ENCODE measurements at regions of chr2 and their contacts with region 1.

Region 1: DNA sequence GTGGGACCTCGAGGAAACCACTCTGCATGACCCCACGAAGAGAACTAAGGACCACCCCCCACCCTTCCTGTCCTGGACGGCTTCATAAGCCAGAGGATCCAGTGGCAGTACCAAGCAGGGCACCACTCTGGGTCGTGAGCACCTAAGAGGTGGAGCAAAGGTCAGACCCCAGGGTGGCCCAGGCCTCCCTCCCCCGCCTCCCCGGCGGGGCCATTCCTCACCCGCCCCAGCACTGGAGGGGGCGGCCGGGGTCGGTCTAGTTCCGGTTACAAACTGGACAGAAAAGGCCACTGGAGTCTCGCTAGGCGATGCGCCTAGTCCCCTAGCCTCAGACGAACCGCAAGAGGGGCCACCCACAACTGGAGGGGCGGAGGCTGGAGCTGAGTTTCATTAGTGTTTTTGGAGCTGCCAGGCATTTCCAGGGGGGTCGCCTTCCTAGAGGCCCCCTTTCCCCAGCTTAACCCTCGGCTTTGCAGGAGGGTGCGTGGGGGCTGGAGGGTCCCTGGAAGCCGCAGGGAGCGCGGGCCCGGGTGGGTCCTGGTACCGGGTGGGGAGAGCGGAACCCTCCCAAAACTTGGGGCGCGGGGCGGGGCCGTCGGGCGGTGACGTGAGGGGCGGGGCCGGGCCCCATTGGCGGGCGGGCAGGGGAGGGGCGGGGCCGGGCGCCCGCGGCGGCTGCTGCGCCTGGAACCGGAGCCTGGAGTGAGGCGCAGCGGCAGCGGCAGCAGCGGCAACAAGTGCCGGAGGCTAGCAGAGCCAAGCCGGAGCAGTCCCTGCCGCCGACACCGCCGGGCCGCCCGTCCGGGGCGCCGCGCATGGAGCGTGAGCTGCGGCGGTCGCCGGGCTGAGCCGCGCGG is at the start of gene B3GNT2:
- DNase-seq: peak; percentile 79 to 92 (median 84)
- ATAC-seq: peak; percentile 75
- H3K4me3 ChIP-seq: peak within 1 kb of the TSS; percentile 93 to 99
- H3K4me3 Mint-ChIP-seq: peak within 1 kb of the TSS; percentile 91
- H3K27ac ChIP-seq: peak within 1 kb of the TSS; percentile 86 to 90
- H3K27ac Mint-ChIP-seq: peak within 1 kb of the TSS; percentile 91
- H3K4me1 ChIP-seq: peaks cover 40% of the 10 kb centered on the region
- H3K4me1 Mint-ChIP-seq: peaks cover 32% of the 10 kb centered on the region
- H3K27me3 ChIP-seq: no peaks in the 10 kb centered on the region
- H3K27me3 Mint-ChIP-seq: no peaks in the 10 kb centered on the region
- CTCF ChIP-seq: no peak
- total RNA-seq, gene B3GNT2: 74.1 to 77.9 TPM

Region 2: DNA sequence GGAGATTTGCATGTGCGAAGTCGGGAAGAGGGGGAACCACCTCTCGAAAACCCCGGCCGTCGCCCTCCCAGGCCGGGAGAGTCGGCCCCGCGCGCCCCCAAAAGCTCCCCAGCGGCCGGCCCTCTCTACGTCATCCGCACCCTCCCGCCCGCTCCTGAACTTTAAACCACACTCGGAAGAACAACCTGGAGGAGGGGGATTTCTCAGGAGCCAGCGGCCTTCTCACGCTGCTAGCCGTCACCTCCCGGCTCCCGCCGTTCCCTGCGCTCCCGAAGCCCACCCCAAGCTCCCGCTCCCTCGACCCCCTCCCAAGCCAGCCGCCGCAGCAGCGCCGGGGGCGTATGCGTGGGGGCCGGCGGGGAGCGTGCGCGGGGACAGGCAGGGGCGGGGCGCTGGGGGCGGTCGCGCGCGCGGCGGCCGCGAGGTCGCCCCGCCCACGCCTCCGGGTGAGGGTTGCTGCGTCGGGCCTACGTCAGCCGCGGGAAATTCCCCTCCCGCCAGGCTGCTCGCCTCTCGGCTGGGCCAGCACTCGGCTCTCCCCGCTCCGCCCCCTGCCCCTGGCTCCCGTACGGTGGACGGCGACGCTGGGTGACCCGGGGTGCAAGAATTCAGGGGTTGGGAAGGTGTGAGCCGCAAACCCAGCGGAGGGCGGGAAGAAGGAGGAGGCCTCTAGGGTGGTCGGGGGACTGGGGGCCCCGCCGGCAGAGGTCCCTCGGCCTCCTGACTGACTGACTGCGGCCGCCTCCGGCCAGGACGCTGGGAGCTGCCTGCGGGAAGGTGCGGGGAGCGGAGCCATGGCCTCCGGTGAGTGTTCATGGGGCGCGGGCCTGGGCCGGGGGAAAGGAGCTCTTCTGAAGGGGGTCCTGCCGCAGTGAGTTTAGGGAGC is 1314.4 kb before region 1 on chr2 and contains the start of gene REL:
- CTCF ChIA-PET with region 1: no interaction called
- POLR2A ChIA-PET with region 1: no interaction called
- intact Hi-C with region 1: loop called in 1 of 2 experiments (anchors 5 kb)
- DNase-seq: peak; percentile 80 to 98 (median 89)
- ATAC-seq: peak; percentile 78
- H3K4me3 ChIP-seq: peak within 1 kb of the TSS; percentile 85 to 99
- H3K4me3 Mint-ChIP-seq: peak within 1 kb of the TSS; percentile 93
- H3K27ac ChIP-seq: peak within 1 kb of the TSS; percentile 97 to 100
- H3K27ac Mint-ChIP-seq: peak within 1 kb of the TSS; percentile 99
- H3K4me1 ChIP-seq: peaks cover 34% of the 10 kb centered on the region
- H3K4me1 Mint-ChIP-seq: peaks cover 30% of the 10 kb centered on the region
- H3K27me3 ChIP-seq: no peaks in the 10 kb centered on the region
- H3K27me3 Mint-ChIP-seq: no peaks in the 10 kb centered on the region
- CTCF ChIP-seq: no peak
- total RNA-seq, gene REL: 202 to 205 TPM

Region 3: GRCh38 chr2:61694312-61695274 is 501.1 kb before region 1 on chr2:
- CTCF ChIA-PET with region 1: no interaction called
- POLR2A ChIA-PET with region 1: no interaction called
- intact Hi-C with region 1: loop called (anchors 10 kb)
- DNase-seq: peak; percentile 65 to 89 (median 82)
- ATAC-seq: peak; percentile 95
- H3K4me3 ChIP-seq: peak overlapping the region; percentile 88 to 93
- H3K4me3 Mint-ChIP-seq: peak overlapping the region; percentile 90
- H3K27ac ChIP-seq: peak overlapping the region; percentile 43 to 63
- H3K27ac Mint-ChIP-seq: peak overlapping the region; percentile 87
- H3K4me1 ChIP-seq: peaks cover 14% of the 10 kb centered on the region
- H3K4me1 Mint-ChIP-seq: peaks cover 16% of the 10 kb centered on the region
- H3K27me3 ChIP-seq: no peaks in the 10 kb centered on the region
- H3K27me3 Mint-ChIP-seq: no peaks in the 10 kb centered on the region
- CTCF ChIP-seq: peak; percentile 52

Region 4: DNA sequence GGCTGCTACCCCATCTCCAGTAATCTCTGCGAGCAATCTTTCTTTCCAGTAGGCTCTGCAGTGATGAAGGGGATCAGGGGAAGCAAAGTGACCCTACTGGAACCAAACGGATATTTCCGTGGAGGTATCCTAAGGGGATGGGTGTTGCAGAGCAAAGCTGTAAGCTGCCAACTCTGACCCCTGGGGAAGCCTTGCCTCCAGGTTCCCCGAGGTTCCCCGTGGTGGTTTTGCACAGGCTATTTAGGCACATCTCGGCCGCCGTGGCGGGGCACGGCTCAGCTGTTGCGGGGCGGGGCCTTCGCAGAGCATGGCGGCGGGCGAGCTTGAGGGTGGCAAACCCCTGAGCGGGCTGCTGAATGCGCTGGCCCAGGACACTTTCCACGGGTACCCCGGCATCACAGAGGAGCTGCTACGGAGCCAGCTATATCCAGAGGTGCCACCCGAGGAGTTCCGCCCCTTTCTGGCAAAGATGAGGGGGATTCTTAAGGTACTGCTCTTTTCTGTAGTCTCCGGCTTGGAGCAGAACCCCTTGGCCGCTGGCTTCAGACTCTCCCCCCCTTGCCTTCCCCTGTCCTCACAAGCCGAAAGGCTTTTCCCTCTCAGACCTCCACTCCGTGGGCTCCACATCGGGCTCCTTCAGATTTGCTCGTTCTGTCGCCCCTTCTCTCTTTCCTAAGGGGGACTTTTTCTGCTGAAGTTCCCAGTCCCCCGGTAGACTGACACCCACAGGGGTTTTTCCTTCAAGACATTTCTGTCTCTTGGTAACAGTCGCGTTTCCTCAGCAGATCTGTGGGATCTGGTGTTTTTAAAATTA is 290.1 kb before region 1 on chr2 and contains the start of gene COMMD1:
- CTCF ChIA-PET with region 1: no interaction called
- POLR2A ChIA-PET with region 1: no interaction called
- intact Hi-C with region 1: loop called in 1 of 2 experiments (anchors 1 kb)
- DNase-seq: peak; percentile 58 to 89 (median 79)
- ATAC-seq: peak; percentile 99
- H3K4me3 ChIP-seq: peak within 1 kb of the TSS; percentile 63 to 79
- H3K4me3 Mint-ChIP-seq: peak within 1 kb of the TSS; percentile 97
- H3K27ac ChIP-seq: peak within 1 kb of the TSS; percentile 43 to 59
- H3K27ac Mint-ChIP-seq: peak within 1 kb of the TSS; percentile 90
- H3K4me1 ChIP-seq: peaks cover 16% of the 10 kb centered on the region
- H3K4me1 Mint-ChIP-seq: peaks cover 34% of the 10 kb centered on the region
- H3K27me3 ChIP-seq: no peaks in the 10 kb centered on the region
- H3K27me3 Mint-ChIP-seq: no peaks in the 10 kb centered on the region
- CTCF ChIP-seq: no peak
- total RNA-seq, gene COMMD1: 8.8 to 11.2 TPM

Region 5: DNA sequence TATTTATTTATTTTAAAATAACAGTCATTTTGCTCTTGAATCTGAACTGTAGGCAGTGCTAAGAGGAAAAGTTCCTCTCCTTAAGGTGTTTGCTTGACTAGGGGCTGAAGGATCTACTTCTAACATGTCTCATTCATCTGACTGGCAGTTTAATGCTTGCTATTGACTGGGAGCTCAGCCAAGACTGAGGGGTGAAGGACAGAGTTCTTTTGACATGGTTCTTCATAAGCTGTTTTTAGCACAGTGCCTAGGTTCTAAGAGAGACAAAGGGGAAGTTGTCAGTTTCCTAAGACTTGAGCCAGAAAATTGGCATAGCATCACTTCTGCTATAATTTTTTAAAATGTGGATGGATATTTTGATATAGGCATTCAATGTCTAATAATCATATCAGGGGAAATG is 217.1 kb before region 1 on chr2:
- CTCF ChIA-PET with region 1: no interaction called
- POLR2A ChIA-PET with region 1: no interaction called
- intact Hi-C with region 1: no loop called
- DNase-seq: no peak
- ATAC-seq: no peak
- H3K4me3 ChIP-seq: no peak overlapping the region
- H3K4me3 Mint-ChIP-seq: no peak overlapping the region
- H3K27ac ChIP-seq: no peak overlapping the region
- H3K27ac Mint-ChIP-seq: no peak overlapping the region
- H3K4me1 ChIP-seq: no peaks in the 10 kb centered on the region
- H3K4me1 Mint-ChIP-seq: peaks cover 2% of the 10 kb centered on the region
- H3K27me3 ChIP-seq: no peaks in the 10 kb centered on the region
- H3K27me3 Mint-ChIP-seq: no peaks in the 10 kb centered on the region
- CTCF ChIP-seq: no peak

Region 6: DNA sequence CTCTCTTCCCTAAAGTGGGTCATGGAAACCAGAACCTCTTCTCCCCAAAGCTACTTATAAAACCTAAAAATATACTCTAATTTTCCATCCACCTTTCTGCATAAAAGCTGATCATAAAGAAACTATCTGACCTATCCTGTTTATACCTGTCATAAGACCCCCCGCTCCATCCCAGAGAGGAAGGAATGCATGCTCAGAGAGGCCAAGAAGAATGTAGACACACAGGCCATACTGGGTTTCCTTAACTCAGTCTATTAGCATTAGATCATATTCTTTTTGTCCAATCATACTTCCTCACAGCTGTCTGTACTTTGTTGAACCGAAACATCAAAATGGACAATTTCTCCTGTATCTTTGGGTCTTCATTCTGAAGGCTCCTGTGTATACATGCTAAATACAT is 52.6 kb after region 1 on chr2:
- CTCF ChIA-PET with region 1: no interaction called
- POLR2A ChIA-PET with region 1: no interaction called
- intact Hi-C with region 1: loop called in 1 of 2 experiments (anchors 10 kb)
- DNase-seq: peak in 1 of 9 experiments; percentile 4
- ATAC-seq: no peak
- H3K4me3 ChIP-seq: no peak overlapping the region
- H3K4me3 Mint-ChIP-seq: no peak overlapping the region
- H3K27ac ChIP-seq: no peak overlapping the region
- H3K27ac Mint-ChIP-seq: peak overlapping the region; percentile 18
- H3K4me1 ChIP-seq: no peaks in the 10 kb centered on the region
- H3K4me1 Mint-ChIP-seq: peaks cover 2% of the 10 kb centered on the region
- H3K27me3 ChIP-seq: no peaks in the 10 kb centered on the region
- H3K27me3 Mint-ChIP-seq: no peaks in the 10 kb centered on the region
- CTCF ChIP-seq: no peak

Region 7: DNA sequence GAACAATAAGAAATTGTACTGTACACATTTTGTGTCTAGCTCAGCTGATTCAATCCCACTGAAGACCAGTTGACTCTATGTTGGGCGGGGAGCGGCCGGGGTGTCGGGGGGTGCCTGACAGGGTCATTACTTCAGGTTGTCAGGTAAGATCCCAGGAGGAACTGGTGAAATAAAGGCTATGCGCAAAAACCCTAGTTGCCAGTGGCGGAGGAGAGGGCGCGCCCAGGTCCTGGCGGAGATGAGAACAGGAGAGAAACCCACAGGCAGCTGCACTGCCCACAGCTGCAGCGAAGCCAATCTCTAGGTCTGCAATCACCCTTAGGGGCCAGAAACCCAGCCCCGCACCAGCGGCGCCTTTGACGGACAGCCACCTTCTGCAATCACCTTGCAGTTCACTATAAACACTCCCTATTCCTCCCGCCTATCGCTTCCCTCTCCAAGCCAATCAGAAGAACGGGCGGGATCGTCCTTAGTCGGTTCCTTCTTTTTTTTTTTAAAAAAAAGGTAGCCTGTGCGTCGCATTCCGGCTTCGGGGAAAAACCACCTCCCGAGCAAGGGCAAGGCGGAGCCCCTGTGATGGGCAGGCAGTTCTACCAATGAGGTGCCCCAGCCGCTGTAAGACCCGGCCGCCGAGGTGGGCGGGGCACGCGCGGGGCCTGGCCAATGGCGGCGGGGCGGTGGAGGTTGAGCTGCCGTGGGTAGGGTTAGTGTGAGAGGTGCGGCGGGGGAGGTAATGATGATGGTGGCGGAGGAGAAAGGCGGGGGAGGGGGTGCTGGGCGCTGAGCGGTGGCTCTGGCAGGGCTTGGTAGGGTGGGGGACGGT is 509.6 kb after region 1 on chr2 and contains the start of gene EHBP1:
- CTCF ChIA-PET with region 1: no interaction called
- POLR2A ChIA-PET with region 1: no interaction called
- intact Hi-C with region 1: loop called (anchors 5 kb)
- DNase-seq: peak; percentile 93 to 99 (median 97)
- ATAC-seq: peak; percentile 96
- H3K4me3 ChIP-seq: peak within 1 kb of the TSS; percentile 74 to 77
- H3K4me3 Mint-ChIP-seq: peak within 1 kb of the TSS; percentile 85
- H3K27ac ChIP-seq: peak within 1 kb of the TSS; percentile 36 to 65
- H3K27ac Mint-ChIP-seq: peak within 1 kb of the TSS; percentile 79
- H3K4me1 ChIP-seq: peaks cover 11% of the 10 kb centered on the region
- H3K4me1 Mint-ChIP-seq: peaks cover 41% of the 10 kb centered on the region
- H3K27me3 ChIP-seq: no peaks in the 10 kb centered on the region
- H3K27me3 Mint-ChIP-seq: no peaks in the 10 kb centered on the region
- CTCF ChIP-seq: no peak
- total RNA-seq, gene EHBP1: 16.2 to 16.7 TPM